ENCODE measurements at regions of chr21 and their contacts with region 1.

Region 1: GRCh38 chr21:46285761-46286496 is at the start of gene YBEY:
- DNase-seq: peak; percentile 83
- ATAC-seq: peak; percentile 85
- H3K4me3 Mint-ChIP-seq: peak within 1 kb of the TSS; percentile 98
- H3K27ac Mint-ChIP-seq: peak within 1 kb of the TSS; percentile 98
- H3K4me1 Mint-ChIP-seq: peaks cover 49% of the 10 kb centered on the region
- H3K27me3 Mint-ChIP-seq: no peaks in the 10 kb centered on the region
- CTCF ChIP-seq: no peak
- total RNA-seq, gene YBEY: 11.8 and 13.7 TPM in 2 replicates

Region 2: DNA sequence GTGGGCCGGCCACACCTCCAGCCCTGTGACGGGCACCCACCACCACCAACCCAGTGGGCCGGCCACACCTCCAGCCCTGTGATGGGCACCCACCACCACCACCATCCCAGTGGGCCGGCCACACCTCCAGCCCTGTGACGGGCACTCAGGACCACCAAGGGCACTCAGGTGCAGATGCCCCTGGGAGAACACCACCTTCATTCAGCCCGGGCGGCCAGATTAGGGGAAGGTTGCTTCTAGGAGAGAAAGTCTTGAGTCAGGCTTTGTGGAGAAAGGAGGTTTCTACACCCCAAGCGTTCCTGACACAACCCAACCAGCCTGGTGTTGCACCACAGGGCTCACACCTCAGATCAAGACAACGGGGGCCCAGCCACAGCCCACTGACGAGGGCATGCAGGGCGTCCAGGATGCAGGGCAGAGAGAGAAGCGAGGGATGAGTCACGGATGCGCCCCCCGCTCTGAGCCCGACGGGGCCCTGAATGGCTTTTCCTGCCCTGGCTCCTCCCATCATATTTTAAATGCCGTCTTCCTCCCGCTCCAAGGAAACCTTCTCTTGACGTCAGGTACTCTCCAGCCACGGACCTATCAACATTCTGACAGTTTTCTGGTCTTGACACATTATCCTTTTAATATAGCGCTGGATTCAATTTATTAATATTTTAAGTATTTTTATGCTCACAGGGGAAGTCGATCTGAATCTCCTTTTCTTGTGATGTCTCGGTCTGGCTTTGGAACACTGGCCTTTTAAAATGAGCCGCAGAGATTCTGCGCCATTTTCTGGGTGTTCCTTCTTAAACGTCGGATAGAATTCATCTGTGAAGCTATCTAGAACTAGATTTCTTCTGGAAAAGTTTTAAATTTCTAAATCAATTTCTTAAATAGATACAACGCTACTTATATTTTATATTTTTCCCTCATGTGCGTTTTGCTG is 101.0 kb before region 1 on chr21:
- CTCF ChIA-PET with region 1: no interaction called
- POLR2A ChIA-PET with region 1: no interaction called
- intact Hi-C with region 1: loop called (anchors 2 kb)
- DNase-seq: peak; percentile 69
- ATAC-seq: peak; percentile 82
- H3K4me3 Mint-ChIP-seq: peak overlapping the region; percentile 89
- H3K27ac Mint-ChIP-seq: peak overlapping the region; percentile 85
- H3K4me1 Mint-ChIP-seq: peaks cover 5% of the 10 kb centered on the region
- H3K27me3 Mint-ChIP-seq: no peaks in the 10 kb centered on the region
- CTCF ChIP-seq: no peak

Region 3: GRCh38 chr21:46228345-46229051 is 57.4 kb before region 1 on chr21 and contains the start of gene LSS:
- CTCF ChIA-PET with region 1: no interaction called
- POLR2A ChIA-PET with region 1: no interaction called
- intact Hi-C with region 1: loop called (anchors 1 kb)
- DNase-seq: peak; percentile 96
- ATAC-seq: peak; percentile 93
- H3K4me3 Mint-ChIP-seq: peak within 1 kb of the TSS; percentile 99
- H3K27ac Mint-ChIP-seq: peak within 1 kb of the TSS; percentile 97
- H3K4me1 Mint-ChIP-seq: peaks cover 39% of the 10 kb centered on the region
- H3K27me3 Mint-ChIP-seq: no peaks in the 10 kb centered on the region
- CTCF ChIP-seq: no peak
- total RNA-seq, gene LSS: 76.3 and 99.0 TPM in 2 replicates

Region 4: DNA sequence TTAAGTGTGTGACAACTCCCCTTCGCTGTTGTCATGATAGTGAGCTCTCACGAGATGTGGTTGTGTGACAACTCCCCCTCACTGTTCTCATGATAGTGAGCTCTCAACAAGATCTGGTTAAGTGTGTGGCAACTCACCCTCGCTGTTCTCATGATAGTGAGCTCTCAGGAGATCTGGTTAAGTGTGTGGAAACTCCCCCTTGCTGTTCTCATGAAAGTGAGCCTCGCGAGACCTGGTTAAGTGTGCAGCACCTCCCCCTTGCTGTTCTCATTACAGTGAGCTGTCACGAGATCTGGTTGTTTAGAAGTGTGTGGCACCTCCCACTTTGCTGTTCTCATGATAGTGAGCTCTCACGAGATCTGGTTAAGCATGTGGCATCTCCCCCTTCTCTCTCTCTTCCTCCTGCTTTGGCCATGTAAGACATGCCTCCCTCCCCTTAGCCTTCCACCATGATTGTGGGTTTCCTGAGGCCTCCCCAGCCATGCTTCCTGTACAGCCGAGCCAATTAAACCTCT is 32.3 kb before region 1 on chr21:
- CTCF ChIA-PET with region 1: no interaction called
- POLR2A ChIA-PET with region 1: interaction called, 4 read pairs
- intact Hi-C with region 1: loop called (anchors 2 kb)
- DNase-seq: no peak
- ATAC-seq: peak; percentile 81
- H3K4me3 Mint-ChIP-seq: peak overlapping the region; percentile 62
- H3K27ac Mint-ChIP-seq: peak overlapping the region; percentile 85
- H3K4me1 Mint-ChIP-seq: peaks cover 49% of the 10 kb centered on the region
- H3K27me3 Mint-ChIP-seq: no peaks in the 10 kb centered on the region
- CTCF ChIP-seq: no peak

Region 5: GRCh38 chr21:46635324-46636172 is 349.6 kb after region 1 on chr21 and contains the start of gene PRMT2:
- CTCF ChIA-PET with region 1: no interaction called
- POLR2A ChIA-PET with region 1: interaction called, 3 read pairs
- intact Hi-C with region 1: loop called (anchors 1 kb)
- DNase-seq: peak; percentile 99
- ATAC-seq: peak; percentile 92
- H3K4me3 Mint-ChIP-seq: peak within 1 kb of the TSS; percentile 92
- H3K27ac Mint-ChIP-seq: peak within 1 kb of the TSS; percentile 90
- H3K4me1 Mint-ChIP-seq: peaks cover 44% of the 10 kb centered on the region
- H3K27me3 Mint-ChIP-seq: peaks cover 11% of the 10 kb centered on the region
- CTCF ChIP-seq: no peak
- total RNA-seq, gene PRMT2: 48.5 and 52.4 TPM in 2 replicates